Activated CD4-positive, alpha-beta T cell treated with anti-CD3 and anti-CD28 coated beads, Interleukin-2, amount 10 ng/mL, durations not matched to agents 24 days and 14 days (primary cell): ENCODE measurements at regions of chr1 and their contacts with region 1.

Region 1: DNA sequence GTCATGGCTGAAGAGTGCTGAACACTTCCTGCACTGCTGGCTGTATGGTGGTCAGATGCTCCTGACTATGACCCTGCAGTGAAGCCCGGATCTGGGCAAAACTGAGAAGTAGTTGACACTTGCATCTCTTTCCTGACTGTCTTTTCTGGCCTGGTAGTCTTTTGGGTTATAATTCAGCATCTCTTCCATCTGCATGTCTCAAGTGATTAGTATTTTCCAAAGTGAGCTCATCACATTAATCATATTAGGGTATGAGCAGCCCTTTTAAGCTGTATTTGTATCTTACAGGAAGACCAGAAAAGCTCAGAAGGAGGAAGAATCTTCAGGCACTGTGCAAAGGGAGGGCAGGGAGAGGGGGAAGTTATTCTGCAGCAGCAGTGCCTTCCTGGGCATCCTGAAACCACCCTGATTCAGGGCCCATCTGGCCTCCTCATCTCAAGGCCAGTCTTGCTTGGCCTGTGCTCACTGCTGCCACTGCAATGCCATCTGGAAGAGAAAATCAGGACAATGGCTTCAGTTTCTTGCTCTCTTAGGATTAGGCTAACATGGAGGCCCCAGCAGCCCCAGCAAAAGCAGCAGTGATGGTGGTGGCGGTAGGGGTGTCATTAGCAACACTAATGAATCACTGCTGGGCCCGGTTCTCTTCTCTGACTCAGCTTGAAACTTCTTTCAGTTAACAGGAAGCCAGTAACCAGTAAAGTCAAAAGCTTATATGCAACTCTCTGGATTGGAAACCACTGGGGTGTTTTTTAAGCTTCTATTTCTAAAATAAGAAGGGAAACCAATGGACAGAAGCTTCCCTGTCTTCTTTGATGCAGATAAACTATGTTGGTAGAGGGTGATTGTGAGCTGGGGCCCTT is 63.3 kb upstream of the WDR26 start:
- DNase-seq: peak; percentile 89
- H3K4me3 Mint-ChIP-seq: peak overlapping the region; percentile 68
- H3K27ac Mint-ChIP-seq: peak overlapping the region; percentile 94
- H3K4me1 Mint-ChIP-seq: peaks cover 53% of the 10 kb centered on the region
- H3K27me3 Mint-ChIP-seq: no peaks in the 10 kb centered on the region

Region 2: DNA sequence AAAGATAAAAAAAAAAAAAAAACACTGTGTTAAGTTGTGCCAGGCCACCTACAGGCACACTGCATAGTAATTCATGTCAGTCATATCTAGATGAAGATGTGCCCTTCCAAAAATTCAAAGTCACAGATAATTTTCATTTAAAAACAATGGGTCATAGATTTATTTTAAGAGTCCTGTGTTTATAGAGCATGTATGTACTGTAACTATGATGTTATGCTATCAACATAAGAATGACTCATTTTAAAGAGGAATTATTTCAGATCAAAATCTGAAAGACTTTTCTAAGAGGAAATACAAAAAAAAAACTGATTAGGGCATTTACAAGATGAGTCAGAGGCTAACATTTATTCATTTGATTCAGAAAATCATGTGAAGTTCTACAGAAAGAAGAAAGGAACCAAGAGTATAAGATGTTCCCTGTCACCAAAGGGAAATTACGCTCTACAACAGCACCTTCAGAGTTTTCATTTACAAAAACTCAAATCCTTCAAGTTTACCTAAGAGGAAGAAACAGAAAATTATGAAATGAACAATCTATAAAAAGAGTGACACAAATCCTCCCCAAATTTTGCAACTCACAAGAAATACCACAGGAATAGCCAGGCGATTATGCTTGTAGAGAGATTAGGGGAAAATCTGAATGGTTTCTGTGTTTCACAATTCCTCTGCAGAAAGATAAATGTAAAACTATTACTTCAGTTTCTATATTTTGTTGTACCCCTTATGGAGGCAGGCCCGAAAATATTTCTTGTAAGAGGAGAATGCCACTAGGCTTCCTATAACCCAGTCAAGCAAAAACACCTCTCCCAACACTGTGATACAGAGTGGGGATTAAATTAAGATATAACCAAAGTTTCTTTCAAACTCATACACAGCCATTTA is 665.9 kb before region 1 on chr1:
- intact Hi-C with region 1: loop called (anchors 5 kb)
- DNase-seq: no peak
- H3K4me3 Mint-ChIP-seq: peak overlapping the region; percentile 51
- H3K27ac Mint-ChIP-seq: peak overlapping the region; percentile 85
- H3K4me1 Mint-ChIP-seq: peaks cover 29% of the 10 kb centered on the region
- H3K27me3 Mint-ChIP-seq: no peaks in the 10 kb centered on the region

Region 3: GRCh38 chr1:224182866-224183590 is 314.9 kb before region 1 on chr1 and contains the start of gene DEGS1:
- intact Hi-C with region 1: loop called (anchors 5 kb)
- DNase-seq: peak; percentile 95
- H3K4me3 Mint-ChIP-seq: peak within 1 kb of the TSS; percentile 96
- H3K27ac Mint-ChIP-seq: peak within 1 kb of the TSS; percentile 97
- H3K4me1 Mint-ChIP-seq: peaks cover 45% of the 10 kb centered on the region
- H3K27me3 Mint-ChIP-seq: peaks cover 3% of the 10 kb centered on the region
- total RNA-seq, gene DEGS1: 51.8 and 56.3 TPM in 2 replicates

Region 4: DNA sequence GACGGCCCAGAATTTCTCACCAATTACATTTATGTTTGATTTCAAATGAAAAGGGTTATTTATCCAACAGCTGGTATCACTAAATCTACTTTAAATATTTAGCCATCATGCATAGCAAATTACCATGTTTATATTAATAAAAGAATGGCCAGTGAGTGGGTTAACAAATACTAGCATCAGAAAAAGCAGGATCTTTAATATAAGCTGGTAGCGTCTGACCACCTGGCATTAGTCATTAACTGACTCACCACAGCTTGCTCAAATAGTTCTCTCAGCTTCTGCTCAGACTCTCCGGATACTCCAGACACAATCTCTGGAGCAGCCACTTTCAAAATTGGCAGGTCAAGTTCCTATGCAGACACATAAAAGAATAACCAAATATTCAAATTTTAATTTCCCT is 197.6 kb before region 1 on chr1:
- intact Hi-C with region 1: no loop called
- DNase-seq: no peak
- H3K4me3 Mint-ChIP-seq: no peak overlapping the region
- H3K27ac Mint-ChIP-seq: no peak overlapping the region
- H3K4me1 Mint-ChIP-seq: no peaks in the 10 kb centered on the region
- H3K27me3 Mint-ChIP-seq: no peaks in the 10 kb centered on the region

Region 5: DNA sequence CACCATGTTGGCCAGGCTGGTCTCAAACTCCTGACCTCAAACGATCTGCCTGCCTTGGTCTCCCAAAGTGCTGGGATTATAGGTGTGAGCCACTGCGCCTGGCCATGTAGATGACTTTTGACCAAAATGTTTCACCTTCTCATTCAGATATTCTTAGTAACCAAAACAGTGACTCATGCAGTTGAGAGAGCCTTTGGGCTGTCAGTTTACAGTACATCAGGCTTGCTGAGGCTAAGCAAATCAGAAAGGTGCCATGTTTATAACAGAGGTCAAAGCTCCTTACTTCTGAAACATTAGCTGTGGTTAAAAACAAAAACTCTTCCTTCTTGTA is 120.3 kb before region 1 on chr1:
- intact Hi-C with region 1: loop called (anchors 2 kb)
- DNase-seq: peak; percentile 71
- H3K4me3 Mint-ChIP-seq: peak overlapping the region; percentile 56
- H3K27ac Mint-ChIP-seq: peak overlapping the region; percentile 84
- H3K4me1 Mint-ChIP-seq: peaks cover 84% of the 10 kb centered on the region
- H3K27me3 Mint-ChIP-seq: no peaks in the 10 kb centered on the region

Region 6: GRCh38 chr1:224466154-224466553 is 31.8 kb before region 1 on chr1:
- intact Hi-C with region 1: no loop called
- DNase-seq: no peak
- H3K4me3 Mint-ChIP-seq: no peak overlapping the region
- H3K27ac Mint-ChIP-seq: no peak overlapping the region
- H3K4me1 Mint-ChIP-seq: peaks cover 7% of the 10 kb centered on the region
- H3K27me3 Mint-ChIP-seq: no peaks in the 10 kb centered on the region

Region 7: DNA sequence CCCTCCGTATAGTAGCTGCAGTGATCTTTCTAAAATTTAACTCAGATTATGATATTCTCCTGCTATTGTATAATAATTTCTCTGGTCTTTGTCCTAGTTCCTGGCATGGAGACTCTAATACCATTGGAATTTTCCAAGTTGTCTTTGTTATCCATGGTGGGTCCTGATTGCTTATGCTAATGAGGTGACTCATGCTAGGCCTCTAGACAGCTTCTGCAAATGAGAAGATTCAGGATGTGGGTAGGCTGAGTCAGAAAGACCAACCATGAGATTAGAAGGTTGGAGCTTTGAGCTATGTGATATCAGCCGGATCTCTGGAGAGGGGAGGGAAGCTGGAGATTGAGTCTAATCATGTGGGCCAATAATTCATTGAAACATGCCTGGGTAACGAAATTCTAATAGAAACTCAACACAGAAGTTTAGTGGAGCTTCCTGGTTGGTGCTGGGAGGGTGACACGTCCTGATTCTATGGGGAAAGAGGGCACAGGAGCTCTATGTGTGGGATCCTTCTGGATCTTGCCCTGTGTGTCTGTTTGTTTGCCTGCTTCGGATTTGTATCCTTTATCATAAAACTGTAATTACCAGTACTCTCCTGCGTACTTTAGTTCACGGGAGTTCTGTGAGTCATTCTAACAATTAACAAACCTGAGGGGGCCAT is 45.0 kb after region 1 on chr1:
- intact Hi-C with region 1: loop called (anchors 2 kb)
- DNase-seq: peak; percentile 75
- H3K4me3 Mint-ChIP-seq: no peak overlapping the region
- H3K27ac Mint-ChIP-seq: peak overlapping the region; percentile 39
- H3K4me1 Mint-ChIP-seq: peaks cover 18% of the 10 kb centered on the region
- H3K27me3 Mint-ChIP-seq: peaks cover 14% of the 10 kb centered on the region

Region 8: DNA sequence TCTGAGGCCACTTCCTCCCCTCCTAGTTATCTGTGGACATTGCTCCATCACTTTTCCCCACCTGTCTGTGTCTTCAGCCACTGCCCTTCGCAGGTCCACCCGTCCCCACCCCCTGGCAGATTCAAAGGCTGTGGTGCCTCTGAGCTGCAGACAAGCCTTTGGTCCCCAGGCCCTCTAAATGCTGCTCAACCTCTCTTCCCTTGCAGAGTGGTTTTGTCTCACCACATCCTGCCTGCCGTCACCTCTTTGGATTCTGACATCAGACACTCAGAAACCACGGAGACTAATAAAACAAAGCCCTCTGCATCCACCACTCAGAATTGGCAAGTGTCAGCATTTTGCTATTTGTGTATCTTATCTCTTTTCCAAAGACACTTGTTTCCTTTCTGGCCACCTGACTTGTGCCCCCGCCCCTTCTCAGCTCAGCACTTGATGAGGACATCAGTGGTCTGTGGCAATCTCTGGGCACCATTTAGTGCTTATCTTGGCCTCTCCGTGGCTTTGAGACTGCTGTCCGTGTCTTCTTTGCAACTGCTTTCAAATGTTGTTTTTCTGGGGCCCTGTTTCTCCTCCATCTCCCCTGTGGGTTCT is 125.9 kb after region 1 on chr1:
- intact Hi-C with region 1: loop called (anchors 5 kb)
- DNase-seq: peak; percentile 95
- H3K4me3 Mint-ChIP-seq: peak overlapping the region; percentile 64
- H3K27ac Mint-ChIP-seq: peak overlapping the region; percentile 87
- H3K4me1 Mint-ChIP-seq: peaks cover 35% of the 10 kb centered on the region
- H3K27me3 Mint-ChIP-seq: peaks cover 32% of the 10 kb centered on the region

Region 9: DNA sequence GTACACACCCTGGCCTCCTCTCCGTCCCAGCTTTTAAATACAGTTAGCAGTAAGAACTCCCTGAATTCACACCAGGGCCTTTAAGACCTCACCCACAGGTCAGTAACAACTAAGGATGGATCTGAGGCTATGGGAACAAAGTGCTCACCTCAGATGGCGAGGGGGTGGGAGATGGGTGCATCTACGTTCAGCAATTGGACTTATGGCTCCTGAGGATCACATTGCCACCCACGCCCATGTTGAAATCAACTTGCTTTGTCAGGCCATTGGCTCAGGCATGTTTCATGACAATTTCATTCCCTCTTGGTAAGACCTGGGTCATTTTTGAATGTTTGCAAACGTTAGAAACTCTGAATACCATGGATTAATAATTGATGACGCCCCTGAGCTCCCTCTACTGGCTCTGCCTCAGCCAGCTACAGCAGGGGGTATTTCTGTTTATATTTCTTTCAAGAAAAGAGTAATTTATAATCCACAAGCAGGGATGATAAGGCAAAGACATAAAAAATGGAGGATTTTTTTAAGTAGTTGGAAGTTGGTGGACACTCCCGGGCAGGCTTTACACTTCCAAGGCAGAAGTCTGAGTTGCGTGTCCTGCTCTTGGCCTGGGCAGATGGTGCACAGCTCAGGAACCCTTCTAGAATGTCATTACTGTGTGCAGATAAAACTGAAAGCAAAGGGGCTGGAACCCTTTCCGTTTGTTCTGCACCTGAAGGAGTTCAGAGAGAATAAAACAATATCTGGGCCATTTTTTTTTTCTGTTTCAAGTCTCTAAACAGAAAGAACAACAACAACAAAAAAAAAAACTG is 943.6 kb after region 1 on chr1:
- intact Hi-C with region 1: loop called (anchors 10 kb)
- DNase-seq: no peak
- H3K4me3 Mint-ChIP-seq: peak overlapping the region; percentile 61
- H3K27ac Mint-ChIP-seq: peak overlapping the region; percentile 76
- H3K4me1 Mint-ChIP-seq: peaks cover 60% of the 10 kb centered on the region
- H3K27me3 Mint-ChIP-seq: peaks cover 2% of the 10 kb centered on the region